ENCODE measurements at regions of chr16 and their contacts with region 1.

Region 1: DNA sequence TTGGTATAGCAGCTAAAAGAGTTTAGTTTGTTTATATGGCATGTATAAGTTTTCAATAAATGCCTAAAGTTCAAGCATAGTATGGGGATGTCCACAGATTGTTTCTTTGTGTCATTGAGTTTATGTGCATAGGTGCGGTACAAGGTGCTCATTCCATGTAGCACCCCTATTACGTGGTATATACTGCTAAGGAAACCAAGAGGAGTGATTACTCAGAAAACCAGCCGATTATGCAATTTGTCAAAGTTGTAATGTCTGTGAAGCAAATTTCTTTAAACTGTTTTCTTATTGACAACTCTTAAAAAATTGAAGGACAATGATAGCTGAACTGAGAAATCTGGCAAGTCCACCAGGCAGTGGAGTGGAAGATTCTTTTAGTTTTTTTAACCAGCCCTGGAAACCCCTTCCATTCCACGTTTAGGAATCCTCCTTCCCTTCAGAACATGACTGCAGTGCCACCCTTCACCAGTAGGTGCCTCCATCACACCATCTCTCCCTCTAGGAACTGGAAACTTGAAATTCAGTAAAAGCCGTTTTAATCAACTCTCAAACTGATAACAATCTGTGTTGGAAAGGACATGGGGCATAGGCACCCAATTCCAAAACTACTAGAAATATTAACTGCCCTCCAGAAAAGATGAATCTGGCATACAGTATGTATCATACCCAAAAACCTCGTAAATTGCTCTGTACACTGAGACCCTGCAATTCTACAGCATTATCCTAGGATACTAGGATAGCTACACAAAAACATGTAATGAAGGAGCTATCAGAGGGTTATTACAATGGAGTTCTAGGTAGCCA is 43.5 kb downstream of the REXO5 start:
- DNase-seq: peak; percentile 30 to 71 (median 54)
- ATAC-seq: peak; percentile 82
- H3K4me3 ChIP-seq: no peak overlapping the region
- H3K4me3 Mint-ChIP-seq: no peak overlapping the region
- H3K27ac ChIP-seq: no peak overlapping the region
- H3K27ac Mint-ChIP-seq: peak overlapping the region in 1 of 9 donors; percentile 41
- H3K4me1 ChIP-seq: peaks cover 5 to 7% of the 10 kb centered on the region in 2 donors
- H3K4me1 Mint-ChIP-seq: peaks cover 6 to 37% (median 12%) of the 10 kb centered on the region in 7 donors
- H3K27me3 ChIP-seq: no peaks in the 10 kb centered on the region
- H3K27me3 Mint-ChIP-seq: no peaks in the 10 kb centered on the region

Region 2: DNA sequence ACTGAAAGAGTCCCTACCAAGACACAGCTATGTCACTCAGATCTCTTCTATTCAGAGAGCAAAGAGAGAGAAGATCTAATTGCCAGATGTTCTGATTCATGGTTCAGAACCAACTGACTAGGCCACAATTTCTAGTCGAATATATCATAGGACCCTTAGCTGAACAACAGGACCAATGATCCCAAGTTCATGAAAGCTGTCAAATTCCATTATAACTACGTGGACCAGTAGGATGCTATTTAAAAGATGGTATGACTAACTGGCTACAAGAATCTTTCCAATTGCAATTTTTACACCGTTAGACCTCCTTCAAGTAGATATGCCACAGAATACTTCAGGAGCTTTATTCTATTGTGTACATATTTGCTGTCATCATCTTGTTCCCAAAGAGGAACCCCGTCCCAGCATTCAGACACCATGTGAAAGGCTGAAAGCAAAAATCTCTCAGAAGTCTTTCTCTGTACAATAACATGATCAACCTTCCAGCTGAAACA is 24.3 kb after region 1 on chr16:
- CTCF ChIA-PET with region 1: interaction called, 18 read pairs
- POLR2A ChIA-PET with region 1: interaction called, 3 read pairs
- intact Hi-C with region 1: loop called (anchors 1 to 2 kb)
- DNase-seq: no peak
- ATAC-seq: no peak
- H3K4me3 ChIP-seq: peak overlapping the region; percentile 35
- H3K4me3 Mint-ChIP-seq: peak overlapping the region in 9 of 10 donors; percentile 67 to 85 (median 81)
- H3K27ac ChIP-seq: peak overlapping the region; percentile 62
- H3K27ac Mint-ChIP-seq: peak overlapping the region; percentile 37 to 99 (median 92)
- H3K4me1 ChIP-seq: peaks cover 18 to 27% of the 10 kb centered on the region in 2 donors
- H3K4me1 Mint-ChIP-seq: peaks cover 30 to 84% (median 40%) of the 10 kb centered on the region in 7 donors
- H3K27me3 ChIP-seq: no peaks in the 10 kb centered on the region
- H3K27me3 Mint-ChIP-seq: no peaks in the 10 kb centered on the region

Region 3: GRCh38 chr16:21001262-21001661 is 151.5 kb after region 1 on chr16:
- CTCF ChIA-PET with region 1: no interaction called
- POLR2A ChIA-PET with region 1: no interaction called
- intact Hi-C with region 1: loop called in 1 of 2 experiments (anchors 5 kb)
- DNase-seq: no peak
- ATAC-seq: no peak
- H3K4me3 ChIP-seq: no peak overlapping the region
- H3K4me3 Mint-ChIP-seq: no peak overlapping the region
- H3K27ac ChIP-seq: no peak overlapping the region
- H3K27ac Mint-ChIP-seq: no peak overlapping the region
- H3K4me1 ChIP-seq: no peaks in the 10 kb centered on the region
- H3K4me1 Mint-ChIP-seq: peaks cover 0 to 1% (median 0%) of the 10 kb centered on the region in 7 donors
- H3K27me3 ChIP-seq: no peaks in the 10 kb centered on the region
- H3K27me3 Mint-ChIP-seq: peaks cover 0 to 19% (median 10%) of the 10 kb centered on the region in 5 donors

Region 4: DNA sequence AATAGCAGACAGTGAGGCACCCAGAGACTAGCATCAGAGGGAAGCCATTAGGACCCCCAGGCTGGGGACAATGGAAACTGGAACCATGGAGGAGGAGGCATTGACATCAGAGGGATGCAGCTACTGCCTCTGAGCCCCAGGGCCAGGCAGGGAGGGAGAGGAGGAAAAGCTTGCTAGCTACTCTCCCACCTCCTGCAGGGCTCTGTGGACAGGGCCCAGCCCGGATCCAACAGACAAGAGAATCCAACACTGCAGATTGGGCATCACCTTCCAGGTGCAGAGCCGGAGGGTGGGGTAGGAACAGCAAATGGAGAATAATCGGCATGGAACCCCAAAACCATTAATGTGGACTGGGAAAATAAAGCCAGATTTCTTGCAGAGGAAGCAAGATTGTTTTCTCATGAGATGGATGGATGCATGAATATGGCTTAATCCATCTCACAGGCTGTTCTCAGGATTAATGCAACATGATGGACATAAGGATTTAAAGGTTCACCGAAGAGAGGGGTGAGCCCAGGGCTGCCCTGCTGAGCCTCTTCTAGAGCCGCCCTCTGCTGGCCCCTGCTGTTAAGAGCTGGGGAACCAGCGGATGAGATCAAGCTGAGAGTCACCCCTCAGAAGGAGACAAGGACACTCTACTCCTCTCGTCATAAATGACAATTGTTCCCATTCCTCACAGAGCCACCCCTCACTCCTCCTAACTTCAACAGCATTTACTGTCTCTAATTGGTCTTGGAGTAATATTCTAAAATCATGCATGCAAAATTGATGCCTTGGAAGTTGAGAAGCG is 252.0 kb after region 1 on chr16:
- CTCF ChIA-PET with region 1: interaction called, 6 read pairs
- POLR2A ChIA-PET with region 1: no interaction called
- intact Hi-C with region 1: loop called in 1 of 2 experiments (anchors 1 kb)
- DNase-seq: peak in 2 of 9 donors; percentile 2 to 6
- ATAC-seq: no peak
- H3K4me3 ChIP-seq: no peak overlapping the region
- H3K4me3 Mint-ChIP-seq: no peak overlapping the region
- H3K27ac ChIP-seq: no peak overlapping the region
- H3K27ac Mint-ChIP-seq: no peak overlapping the region
- H3K4me1 ChIP-seq: no peaks in the 10 kb centered on the region
- H3K4me1 Mint-ChIP-seq: peaks cover 0 to 2% (median 0%) of the 10 kb centered on the region in 7 donors
- H3K27me3 ChIP-seq: no peaks in the 10 kb centered on the region
- H3K27me3 Mint-ChIP-seq: peaks cover 9 to 40% (median 20%) of the 10 kb centered on the region in 5 donors

Region 5: GRCh38 chr16:21179126-21179982 is 329.6 kb after region 1 on chr16:
- CTCF ChIA-PET with region 1: no interaction called
- POLR2A ChIA-PET with region 1: no interaction called
- intact Hi-C with region 1: loop called in 1 of 2 experiments (anchors 10 kb)
- DNase-seq: no peak
- ATAC-seq: no peak
- H3K4me3 ChIP-seq: no peak overlapping the region
- H3K4me3 Mint-ChIP-seq: no peak overlapping the region
- H3K27ac ChIP-seq: no peak overlapping the region
- H3K27ac Mint-ChIP-seq: no peak overlapping the region
- H3K4me1 ChIP-seq: no peaks in the 10 kb centered on the region
- H3K4me1 Mint-ChIP-seq: no peaks in the 10 kb centered on the region
- H3K27me3 ChIP-seq: no peaks in the 10 kb centered on the region
- H3K27me3 Mint-ChIP-seq: no peaks in the 10 kb centered on the region

Region 6: GRCh38 chr16:21277927-21278706 is 428.3 kb after region 1 on chr16 and contains the start of gene CRYM:
- CTCF ChIA-PET with region 1: no interaction called
- POLR2A ChIA-PET with region 1: no interaction called
- intact Hi-C with region 1: loop called in 1 of 2 experiments (anchors 2 kb)
- DNase-seq: peak in 7 of 9 donors; percentile 10 to 56 (median 17)
- ATAC-seq: peak; percentile 83
- H3K4me3 ChIP-seq: no peak within 1 kb of the TSS
- H3K4me3 Mint-ChIP-seq: peak within 1 kb of the TSS in 8 of 10 donors; percentile 24 to 69 (median 50)
- H3K27ac ChIP-seq: no peak within 1 kb of the TSS
- H3K27ac Mint-ChIP-seq: no peak within 1 kb of the TSS
- H3K4me1 ChIP-seq: no peaks in the 10 kb centered on the region
- H3K4me1 Mint-ChIP-seq: peaks cover 0 to 7% (median 5%) of the 10 kb centered on the region in 7 donors
- H3K27me3 ChIP-seq: peaks cover 0 to 10% of the 10 kb centered on the region in 2 donors
- H3K27me3 Mint-ChIP-seq: peaks cover 60 to 78% (median 66%) of the 10 kb centered on the region in 5 donors
- total RNA-seq, gene CRYM: 0.44 TPM in 1 of 5 experiments, not detected in the others